ENCODE measurements at regions of chr18 and their contacts with region 1.

Region 1: DNA sequence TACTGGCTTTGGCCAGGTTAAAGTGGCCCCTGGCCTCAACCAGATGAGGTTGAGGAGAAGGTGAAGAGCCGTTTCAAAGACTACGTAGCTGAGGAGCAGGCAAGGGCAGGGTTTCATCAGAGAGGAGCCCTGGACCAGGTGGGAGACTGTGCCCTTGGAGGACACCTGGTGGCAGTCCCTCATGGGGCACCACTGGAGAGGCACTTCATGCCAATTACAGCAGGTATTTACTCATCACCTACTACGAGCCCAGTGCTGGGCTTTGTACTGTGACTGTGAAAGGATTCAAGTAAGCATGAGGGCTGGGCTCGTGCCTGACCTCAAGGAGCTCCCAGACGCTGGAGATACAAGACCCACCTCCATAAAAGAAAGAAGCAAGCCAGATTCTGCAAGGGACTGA is 37.6 kb downstream of the SMAD7 start:
- DNase-seq: peak; percentile 67
- H3K4me3 Mint-ChIP-seq: no peak overlapping the region
- H3K27ac Mint-ChIP-seq: no peak overlapping the region
- H3K4me1 Mint-ChIP-seq: peaks cover 42% of the 10 kb centered on the region
- H3K27me3 Mint-ChIP-seq: no peaks in the 10 kb centered on the region

Region 2: DNA sequence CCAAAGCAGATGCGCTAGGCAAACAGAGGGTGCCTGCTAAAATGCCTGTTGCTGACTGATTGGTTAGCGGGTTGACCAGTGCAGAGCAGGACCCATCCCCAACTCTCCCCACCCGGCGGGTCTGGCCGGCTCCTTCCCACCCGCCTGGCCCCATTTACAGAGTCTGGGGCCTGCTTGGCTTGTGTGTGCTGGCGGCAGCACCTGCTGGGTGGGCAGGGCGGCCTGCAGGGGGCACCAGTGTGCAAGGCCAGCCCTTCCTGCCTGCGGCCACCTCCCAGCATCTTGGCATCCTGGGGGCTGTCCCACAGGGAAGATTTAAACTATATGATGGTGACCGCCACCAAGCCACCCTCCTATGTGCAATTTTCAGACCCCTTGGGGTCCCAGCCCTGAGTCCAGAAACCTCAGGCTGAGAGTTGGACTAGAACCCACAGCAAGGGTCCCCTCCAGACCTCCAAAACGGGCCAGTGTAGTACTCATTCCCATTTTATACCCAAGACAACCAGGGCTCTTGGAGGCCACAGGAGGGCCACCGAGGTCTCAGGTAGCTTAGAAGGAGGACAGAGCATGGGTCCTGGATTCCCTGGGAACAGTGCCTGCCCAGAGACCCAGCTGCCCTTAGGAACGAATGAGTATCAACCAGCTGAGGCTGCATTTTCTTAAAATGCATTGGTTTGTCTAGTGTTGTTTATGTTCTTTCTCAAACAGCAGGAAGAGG is 136.0 kb before region 1 on chr18:
- CTCF ChIA-PET with region 1: interaction called, 27 read pairs
- POLR2A ChIA-PET with region 1: interaction called, 4 read pairs
- DNase-seq: peak; percentile 77
- H3K4me3 Mint-ChIP-seq: no peak overlapping the region
- H3K27ac Mint-ChIP-seq: no peak overlapping the region
- H3K4me1 Mint-ChIP-seq: peaks cover 9% of the 10 kb centered on the region
- H3K27me3 Mint-ChIP-seq: no peaks in the 10 kb centered on the region

Measured in activated CD4-positive, alpha-beta memory T cell treated with anti-CD3 and anti-CD28 coated beads, Interleukin-2, amount 10 ng/mL, durations not matched to agents 7 days and 5 days (primary cell).